Activated naive CD4-positive, alpha-beta T cell treated with anti-CD3 and anti-CD28 coated beads, Interleukin-2, amount 10 ng/mL, durations not matched to agents 7 days and 5 days (primary cell): ENCODE measurements at regions of chr11 and their contacts with region 1.

Region 1: DNA sequence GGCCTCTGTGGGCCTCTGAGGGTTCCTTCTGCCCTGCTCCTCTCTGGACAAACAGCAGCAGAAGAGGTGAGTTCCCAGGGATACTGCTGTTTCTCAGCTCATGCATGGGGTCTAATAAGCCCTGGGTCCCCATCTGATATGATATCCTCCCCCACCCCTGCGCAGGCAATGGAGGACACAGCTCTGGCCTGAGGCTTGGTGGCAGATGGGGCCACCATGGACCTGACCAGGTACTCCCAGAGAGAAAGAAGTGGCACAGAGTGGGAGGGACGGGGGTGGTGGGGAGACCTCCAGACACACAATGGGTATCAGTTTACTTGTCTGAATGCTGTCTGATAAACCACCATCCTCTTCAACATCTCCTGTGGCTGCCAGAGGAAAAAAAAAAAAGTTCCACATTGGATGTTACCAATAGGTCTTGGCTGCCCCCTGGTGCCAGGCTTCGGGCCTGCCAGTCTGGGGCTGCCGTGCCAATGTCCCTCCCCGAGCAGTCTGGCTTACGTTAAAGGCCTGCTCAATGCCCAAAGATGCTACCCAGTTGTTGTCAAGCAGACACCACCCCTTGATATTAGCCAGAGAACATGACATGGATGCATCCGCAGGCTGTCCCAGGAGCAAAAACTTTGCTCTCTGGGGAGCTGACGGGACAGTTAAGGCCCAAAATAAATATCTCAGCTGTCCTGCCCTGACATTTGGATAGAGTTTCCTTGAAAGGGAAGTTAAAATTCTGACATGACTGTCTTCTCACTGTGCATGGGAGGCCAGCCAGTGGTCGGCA is 27.9 kb upstream of the ABCC8 start:
- DNase-seq: peak; percentile 88
- H3K4me3 Mint-ChIP-seq: no peak overlapping the region
- H3K27ac Mint-ChIP-seq: no peak overlapping the region
- H3K4me1 Mint-ChIP-seq: no peaks in the 10 kb centered on the region
- H3K27me3 Mint-ChIP-seq: peaks cover 39% of the 10 kb centered on the region

Region 2: DNA sequence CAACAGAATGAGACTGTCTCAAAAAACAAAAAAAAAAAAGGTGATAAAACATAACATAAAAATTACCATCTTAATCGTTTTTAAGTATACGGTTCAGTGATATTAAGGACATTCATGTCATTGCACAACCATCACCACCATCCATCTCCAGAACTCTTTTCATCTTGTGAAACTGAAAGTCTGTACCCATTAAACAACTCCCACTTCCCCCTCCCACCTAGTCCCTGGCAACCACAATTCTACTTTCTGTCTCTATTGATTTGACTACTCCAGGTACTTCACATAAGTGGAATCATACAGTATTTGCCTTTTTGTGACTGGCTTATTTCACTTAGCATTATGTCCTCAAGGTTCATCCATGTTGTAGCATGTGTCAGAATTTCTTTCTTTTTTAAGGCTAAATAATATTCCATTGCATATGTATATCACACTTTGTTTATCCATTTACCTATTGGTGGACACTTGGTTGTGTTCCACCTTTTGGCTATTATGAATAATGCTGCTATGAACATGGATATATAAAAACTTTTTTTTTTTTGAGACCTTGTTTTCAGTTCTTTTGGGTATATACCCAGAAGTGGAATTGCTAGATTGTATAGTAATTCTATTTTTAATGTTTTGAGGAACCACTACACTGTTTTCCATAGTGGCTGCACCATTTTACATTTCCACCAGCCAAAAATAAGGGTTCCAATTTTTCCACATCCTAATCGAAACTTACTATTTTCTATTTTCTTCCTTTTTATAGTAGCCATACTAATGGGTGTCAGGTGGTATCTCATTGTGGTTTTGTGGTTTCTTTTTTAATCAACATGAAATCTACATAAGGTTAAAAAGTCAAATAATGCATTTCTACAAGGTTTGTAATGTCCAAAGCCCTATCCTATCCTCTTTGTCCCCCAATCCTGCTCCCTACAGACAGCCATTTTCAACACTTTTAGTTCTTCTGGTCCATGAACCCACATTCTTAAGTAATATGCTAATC is 273.4 kb before region 1 on chr11:
- CTCF ChIA-PET with region 1: interaction called, 23 read pairs
- DNase-seq: peak; percentile 61
- H3K4me3 Mint-ChIP-seq: no peak overlapping the region
- H3K27ac Mint-ChIP-seq: peak overlapping the region; percentile 34
- H3K4me1 Mint-ChIP-seq: peaks cover 25% of the 10 kb centered on the region
- H3K27me3 Mint-ChIP-seq: peaks cover 37% of the 10 kb centered on the region

Region 3: DNA sequence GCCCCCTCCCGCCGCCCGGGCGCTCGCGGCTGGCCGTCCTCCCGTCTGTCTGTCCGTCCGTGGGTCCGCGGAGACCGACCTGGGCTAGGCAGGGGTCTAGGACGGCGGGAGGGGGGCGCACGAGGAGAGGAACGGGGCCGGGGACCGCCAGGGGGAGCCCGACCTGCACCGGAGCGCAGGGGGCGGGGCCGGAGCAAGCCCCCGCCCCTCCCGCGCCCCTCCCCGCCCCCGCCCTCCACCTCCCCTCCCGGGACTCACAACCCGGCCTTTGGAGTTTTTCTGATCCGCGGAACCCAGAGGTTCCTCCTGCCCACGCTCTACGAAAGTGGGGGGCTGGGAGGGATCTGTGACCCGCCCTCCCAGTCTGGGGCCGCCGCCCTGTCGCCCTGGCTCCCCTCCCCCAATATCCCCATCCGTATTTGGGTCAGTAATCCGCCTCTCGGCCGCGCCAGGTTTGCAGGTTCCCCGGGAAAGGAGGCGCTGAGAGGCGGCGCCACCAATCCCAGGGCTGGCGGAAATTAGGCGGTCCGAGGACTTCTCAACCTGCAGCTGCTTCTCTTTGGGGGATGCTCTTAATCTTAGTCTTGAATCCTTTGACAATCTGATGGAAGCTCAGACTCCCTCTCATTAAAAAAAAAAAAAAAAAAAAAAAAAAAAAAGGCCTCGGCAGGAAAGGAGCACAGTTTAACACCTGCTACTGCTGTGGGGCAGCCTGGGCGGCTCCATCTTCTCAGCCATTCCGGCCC is 115.1 kb before region 1 on chr11:
- CTCF ChIA-PET with region 1: interaction called, 143 read pairs
- DNase-seq: peak; percentile 84
- H3K4me3 Mint-ChIP-seq: peak overlapping the region; percentile 75
- H3K27ac Mint-ChIP-seq: no peak overlapping the region
- H3K4me1 Mint-ChIP-seq: peaks cover 16% of the 10 kb centered on the region
- H3K27me3 Mint-ChIP-seq: peaks cover 61% of the 10 kb centered on the region